Naive thymus-derived CD4-positive, alpha-beta T cell (primary cell): ENCODE measurements at regions of chr2 and their contacts with region 1.

Region 1: DNA sequence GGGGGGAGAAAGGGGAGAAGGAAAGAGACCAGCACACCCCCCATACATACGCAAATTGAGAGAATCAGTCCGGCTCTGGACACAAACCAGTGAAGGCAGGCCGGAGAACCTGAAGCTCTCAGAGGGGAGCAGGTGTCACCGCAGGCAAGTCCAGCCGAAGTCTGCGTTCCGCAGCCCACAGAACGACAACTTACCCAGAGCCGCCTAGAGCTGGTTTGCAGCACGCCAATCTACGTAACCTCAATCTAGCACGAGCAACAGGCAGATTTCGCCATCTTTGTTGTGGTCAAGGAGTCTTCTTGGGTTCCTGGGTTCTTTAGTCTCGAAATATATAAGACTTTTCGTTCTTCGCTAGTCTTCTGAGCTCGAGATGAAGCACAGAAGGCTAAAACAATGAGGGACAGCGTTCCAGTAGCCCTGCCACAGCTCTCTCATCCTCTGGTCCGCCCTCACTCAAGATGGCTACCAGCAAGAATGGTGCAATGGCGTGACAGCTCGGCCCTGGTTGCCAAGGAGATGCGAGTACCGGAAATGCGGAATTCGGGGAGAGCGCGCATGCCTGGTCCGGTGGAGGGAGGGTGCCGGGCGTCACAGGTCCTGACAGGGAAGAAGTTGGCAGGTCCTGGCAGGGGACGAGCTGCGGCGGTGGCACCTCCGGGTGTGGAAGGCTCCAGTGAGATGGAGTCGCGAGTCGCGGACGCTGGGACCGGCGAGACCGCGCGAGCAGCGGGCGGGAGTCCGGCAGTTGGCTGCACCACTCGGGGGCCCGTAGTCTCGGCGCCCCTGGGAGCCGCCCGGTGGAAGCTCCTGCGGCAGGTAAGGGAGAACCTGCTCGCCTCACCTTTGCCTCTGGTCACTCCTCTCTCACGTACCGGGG is at the starts of genes CAMKMT and PREPL:
- DNase-seq: peak; percentile 95 to 99 (median 99)
- ATAC-seq: peak; percentile 93
- H3K4me3 ChIP-seq: peak within 1 kb of the TSS; percentile 88
- H3K4me3 Mint-ChIP-seq: peak within 1 kb of the TSS; percentile 92 to 100 (median 98)
- H3K27ac ChIP-seq: peak within 1 kb of the TSS; percentile 99
- H3K27ac Mint-ChIP-seq: peak within 1 kb of the TSS; percentile 96 to 100 (median 99)
- H3K4me1 ChIP-seq: peaks cover 16 to 17% of the 10 kb centered on the region in 2 donors
- H3K4me1 Mint-ChIP-seq: peaks cover 22 to 81% (median 61%) of the 10 kb centered on the region in 7 donors
- H3K27me3 ChIP-seq: no peaks in the 10 kb centered on the region
- H3K27me3 Mint-ChIP-seq: peaks cover 0 to 3% (median 0%) of the 10 kb centered on the region in 5 donors
- total RNA-seq, gene CAMKMT: 11.1 to 20.8 (median 18.7) TPM
- total RNA-seq, gene PREPL: 22.0 to 41.9 (median 28.5) TPM

Region 2: GRCh38 chr2:43995733-43996533 is 365.6 kb before region 1 on chr2 and contains the start of gene LRPPRC:
- CTCF ChIA-PET with region 1: no interaction called
- POLR2A ChIA-PET with region 1: interaction called, 5 read pairs
- intact Hi-C with region 1: loop called (anchors 1 kb)
- DNase-seq: peak; percentile 69 to 95 (median 90)
- ATAC-seq: peak; percentile 98
- H3K4me3 ChIP-seq: peak within 1 kb of the TSS; percentile 98
- H3K4me3 Mint-ChIP-seq: peak within 1 kb of the TSS; percentile 89 to 99 (median 90)
- H3K27ac ChIP-seq: peak within 1 kb of the TSS; percentile 84
- H3K27ac Mint-ChIP-seq: peak within 1 kb of the TSS; percentile 95 to 100 (median 97)
- H3K4me1 ChIP-seq: peaks cover 9 to 25% of the 10 kb centered on the region in 2 donors
- H3K4me1 Mint-ChIP-seq: peaks cover 34 to 62% (median 52%) of the 10 kb centered on the region in 7 donors
- H3K27me3 ChIP-seq: no peaks in the 10 kb centered on the region
- H3K27me3 Mint-ChIP-seq: peaks cover 0 to 1% (median 0%) of the 10 kb centered on the region in 5 donors
- total RNA-seq, gene LRPPRC: 54.3 to 92.7 (median 71.2) TPM

Region 3: DNA sequence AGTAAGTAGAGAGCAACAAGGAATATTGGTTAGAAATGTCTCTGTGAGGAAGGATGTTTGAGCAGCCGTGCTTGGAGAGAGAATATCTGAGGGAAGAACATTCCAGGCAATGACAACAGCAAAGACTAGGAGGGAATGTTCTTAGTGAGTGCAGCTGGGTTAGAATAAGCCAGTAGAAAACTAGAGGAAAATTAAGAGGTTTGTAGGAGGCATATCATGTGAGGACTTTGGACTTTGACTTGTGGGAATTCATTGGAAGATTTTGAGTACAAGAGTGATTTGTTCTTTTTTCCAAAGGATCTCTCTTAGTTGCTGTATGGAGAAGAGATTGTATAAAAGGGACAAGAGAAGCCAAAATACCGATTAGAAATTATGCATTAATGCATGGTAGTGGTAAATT is 145.7 kb before region 1 on chr2:
- CTCF ChIA-PET with region 1: no interaction called
- POLR2A ChIA-PET with region 1: no interaction called
- intact Hi-C with region 1: no loop called
- DNase-seq: no peak
- ATAC-seq: no peak
- H3K4me3 ChIP-seq: no peak overlapping the region
- H3K4me3 Mint-ChIP-seq: no peak overlapping the region
- H3K27ac ChIP-seq: no peak overlapping the region
- H3K27ac Mint-ChIP-seq: peak overlapping the region in 7 of 9 donors; percentile 16 to 79 (median 56)
- H3K4me1 ChIP-seq: no peaks in the 10 kb centered on the region
- H3K4me1 Mint-ChIP-seq: peaks cover 9 to 54% (median 41%) of the 10 kb centered on the region in 7 donors
- H3K27me3 ChIP-seq: no peaks in the 10 kb centered on the region
- H3K27me3 Mint-ChIP-seq: no peaks in the 10 kb centered on the region

Region 4: GRCh38 chr2:44233450-44234128 is 128.0 kb before region 1 on chr2:
- CTCF ChIA-PET with region 1: no interaction called
- POLR2A ChIA-PET with region 1: interaction called, 8 read pairs
- intact Hi-C with region 1: loop called (anchors 1 to 5 kb)
- DNase-seq: no peak
- ATAC-seq: no peak
- H3K4me3 ChIP-seq: no peak overlapping the region
- H3K4me3 Mint-ChIP-seq: no peak overlapping the region
- H3K27ac ChIP-seq: no peak overlapping the region
- H3K27ac Mint-ChIP-seq: peak overlapping the region in 4 of 9 donors; percentile 25 to 71 (median 48)
- H3K4me1 ChIP-seq: peaks cover 16 to 17% of the 10 kb centered on the region in 2 donors
- H3K4me1 Mint-ChIP-seq: peaks cover 6 to 46% (median 36%) of the 10 kb centered on the region in 7 donors
- H3K27me3 ChIP-seq: no peaks in the 10 kb centered on the region
- H3K27me3 Mint-ChIP-seq: no peaks in the 10 kb centered on the region

Region 5: GRCh38 chr2:44479122-44479887 is 117.7 kb after region 1 on chr2:
- CTCF ChIA-PET with region 1: interaction called, 4 read pairs
- POLR2A ChIA-PET with region 1: no interaction called
- intact Hi-C with region 1: loop called in 1 of 2 experiments (anchors 1 kb)
- DNase-seq: peak in 8 of 9 donors; percentile 23 to 79 (median 68)
- ATAC-seq: peak; percentile 100
- H3K4me3 ChIP-seq: no peak overlapping the region
- H3K4me3 Mint-ChIP-seq: peak overlapping the region in 1 of 10 donors; percentile 8
- H3K27ac ChIP-seq: no peak overlapping the region
- H3K27ac Mint-ChIP-seq: peak overlapping the region in 5 of 9 donors; percentile 5 to 55 (median 38)
- H3K4me1 ChIP-seq: peaks cover 0 to 4% of the 10 kb centered on the region in 2 donors
- H3K4me1 Mint-ChIP-seq: peaks cover 0 to 11% (median 6%) of the 10 kb centered on the region in 7 donors
- H3K27me3 ChIP-seq: no peaks in the 10 kb centered on the region
- H3K27me3 Mint-ChIP-seq: no peaks in the 10 kb centered on the region